Adrenal gland (tissue), 19 donors: ENCODE measurements at regions of chr16 and their contacts with region 1.

Region 1: DNA sequence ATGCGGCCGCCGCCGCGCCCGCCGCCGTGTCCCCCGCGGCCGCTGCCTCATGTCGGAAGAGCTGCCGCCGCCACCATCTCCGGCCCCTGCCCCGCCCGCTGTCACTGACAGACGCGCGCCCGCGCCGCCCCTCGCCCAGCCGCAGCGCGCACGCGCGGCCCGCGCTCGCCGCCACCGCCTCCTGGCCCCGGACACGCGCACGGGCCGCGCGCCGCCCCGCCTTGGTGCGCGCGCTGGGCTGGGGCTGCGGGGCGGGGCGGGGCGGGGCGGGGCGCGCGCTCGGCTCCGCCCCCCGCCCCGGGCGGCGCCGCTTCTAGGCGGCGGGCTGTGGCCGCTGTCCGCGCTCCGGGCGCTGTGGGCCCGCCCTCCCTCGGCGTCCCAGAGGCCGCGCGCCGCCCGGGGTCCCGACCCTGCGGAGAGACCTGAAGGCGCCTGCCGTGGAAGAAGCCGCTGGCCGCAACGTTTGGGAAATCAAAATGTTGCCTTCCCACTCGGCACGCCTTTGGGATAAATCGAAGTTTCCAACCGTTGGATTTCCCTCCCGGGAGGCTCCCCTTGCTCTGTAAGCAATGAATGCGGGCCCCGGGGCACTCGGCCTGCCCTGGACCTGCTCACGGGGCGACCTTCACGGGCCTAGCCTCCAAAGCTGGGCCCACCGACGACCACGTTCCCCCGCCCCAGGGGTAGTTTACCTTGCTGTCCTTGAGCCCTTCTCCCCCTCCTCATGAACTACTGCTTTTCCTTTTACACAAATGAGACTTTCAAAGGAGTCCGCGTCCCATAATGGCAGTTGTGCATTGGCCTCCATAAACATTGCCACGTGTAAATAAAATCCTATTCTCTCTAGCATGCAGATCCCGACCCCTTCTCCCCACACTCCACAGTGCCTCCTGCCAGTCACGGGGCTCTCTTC is at the start of gene ADCY9:
- DNase-seq: peak; percentile 59 to 82 (median 71)
- H3K4me3 ChIP-seq: peak within 1 kb of the TSS in 3 of 4 donors; percentile 55 to 83 (median 70)
- H3K27ac ChIP-seq: peak within 1 kb of the TSS in 4 of 5 donors; percentile 53 to 89 (median 60)
- H3K4me1 ChIP-seq: peaks cover 7 to 45% of the 10 kb centered on the region in 2 donors
- H3K27me3 ChIP-seq: no peaks in the 10 kb centered on the region
- CTCF ChIP-seq: no peak
- POLR2A ChIP-seq: peak; percentile 21 to 64
- total RNA-seq, gene ADCY9: 2.3 to 37.6 (median 20.0) TPM

Region 2: GRCh38 chr16:3983081-3983520 is 133.5 kb before region 1 on chr16:
- intact Hi-C with region 1: loop called in 1 of 2 experiments (anchors 5 kb)
- DNase-seq: peak; percentile 70 to 89 (median 79)
- H3K4me3 ChIP-seq: no peak overlapping the region
- H3K27ac ChIP-seq: no peak overlapping the region
- H3K4me1 ChIP-seq: no peaks in the 10 kb centered on the region
- H3K27me3 ChIP-seq: no peaks in the 10 kb centered on the region
- CTCF ChIP-seq: peak; percentile 36 to 83 (median 71)
- POLR2A ChIP-seq: no peak

Region 3: DNA sequence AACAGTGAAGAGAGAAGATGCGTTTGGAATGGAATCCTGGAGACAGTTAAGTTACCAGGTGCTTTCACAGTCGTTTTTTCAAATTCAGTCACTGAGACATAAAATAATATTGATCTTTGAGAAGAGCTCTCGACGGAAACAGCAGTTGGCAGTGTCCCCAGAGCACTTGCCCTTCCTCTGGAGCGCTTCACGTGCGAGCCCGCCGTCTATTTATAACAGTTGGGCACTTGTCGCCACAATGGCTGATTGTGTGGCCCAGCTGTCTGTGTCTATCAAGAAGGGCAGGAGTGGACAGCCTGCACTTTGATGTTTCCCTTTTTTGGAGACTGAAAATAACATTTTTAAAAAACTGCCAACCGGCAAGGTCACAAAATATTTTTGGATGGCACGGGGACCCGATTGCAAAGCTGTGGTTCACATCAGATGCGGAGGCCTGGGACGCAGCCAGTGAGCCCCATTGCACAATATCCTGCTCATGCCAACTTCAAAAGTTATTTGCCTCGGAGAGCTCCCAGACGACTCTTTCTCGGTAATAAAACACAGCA is 63.2 kb before region 1 on chr16:
- intact Hi-C with region 1: loop called in 1 of 2 experiments (anchors 10 kb)
- DNase-seq: peak; percentile 81 to 95 (median 91)
- H3K4me3 ChIP-seq: peak overlapping the region in 1 of 4 donors; percentile 28
- H3K27ac ChIP-seq: peak overlapping the region in 4 of 5 donors; percentile 44 to 70 (median 66)
- H3K4me1 ChIP-seq: peaks cover 17 to 22% of the 10 kb centered on the region in 2 donors
- H3K27me3 ChIP-seq: no peaks in the 10 kb centered on the region
- CTCF ChIP-seq: no peak
- POLR2A ChIP-seq: peak in 1 of 2 donors; percentile 32

Region 4: DNA sequence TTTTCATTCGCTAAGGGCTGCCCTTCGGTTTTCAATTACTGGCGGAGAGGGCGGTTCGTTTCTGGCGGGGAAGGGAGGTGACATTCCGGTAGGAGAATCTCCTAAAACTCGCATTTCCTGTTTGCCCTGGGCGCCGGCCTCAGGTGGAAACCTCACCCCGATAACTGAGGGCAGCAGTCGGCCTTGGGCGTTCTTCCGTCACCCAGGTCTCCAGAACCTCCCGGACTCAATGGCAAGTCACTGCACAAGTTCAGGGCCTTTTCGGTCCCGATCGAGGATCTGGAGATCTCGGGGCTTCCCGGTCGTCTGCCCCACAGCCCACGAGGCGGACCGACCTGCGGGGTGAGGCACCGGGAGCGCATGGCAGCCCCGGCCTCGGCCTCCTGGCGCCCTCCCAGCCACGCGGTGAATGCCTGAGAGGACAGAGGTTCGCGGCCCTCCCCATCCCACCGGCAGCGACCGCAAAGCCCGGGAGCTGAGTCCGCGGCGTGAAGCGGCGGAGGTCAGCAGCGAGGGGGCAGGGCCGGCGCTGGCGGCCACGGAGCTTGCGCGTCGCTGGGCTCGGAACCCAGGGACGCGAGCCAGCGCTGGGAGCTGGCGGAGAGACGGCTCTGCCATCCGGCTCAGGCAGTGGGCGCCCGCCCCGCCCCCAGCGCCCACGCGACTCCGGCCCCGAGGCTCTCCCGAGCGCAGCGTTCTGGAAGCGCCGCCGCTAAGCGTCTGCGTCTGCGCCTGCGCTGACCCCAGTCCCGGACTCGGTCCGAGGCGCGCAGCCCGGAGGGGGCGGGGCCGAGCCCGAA is 66.8 kb after region 1 on chr16:
- intact Hi-C with region 1: loop called in 1 of 2 experiments (anchors 5 kb)
- DNase-seq: peak; percentile 91 to 97 (median 94)
- H3K4me3 ChIP-seq: peak overlapping the region; percentile 41 to 86 (median 70)
- H3K27ac ChIP-seq: peak overlapping the region; percentile 95 to 98 (median 97)
- H3K4me1 ChIP-seq: peaks cover 5 to 7% of the 10 kb centered on the region in 2 donors
- H3K27me3 ChIP-seq: no peaks in the 10 kb centered on the region
- CTCF ChIP-seq: peak in 3 of 6 experiments; percentile 10 to 25 (median 14)
- POLR2A ChIP-seq: peak; percentile 40 to 82

Region 5: DNA sequence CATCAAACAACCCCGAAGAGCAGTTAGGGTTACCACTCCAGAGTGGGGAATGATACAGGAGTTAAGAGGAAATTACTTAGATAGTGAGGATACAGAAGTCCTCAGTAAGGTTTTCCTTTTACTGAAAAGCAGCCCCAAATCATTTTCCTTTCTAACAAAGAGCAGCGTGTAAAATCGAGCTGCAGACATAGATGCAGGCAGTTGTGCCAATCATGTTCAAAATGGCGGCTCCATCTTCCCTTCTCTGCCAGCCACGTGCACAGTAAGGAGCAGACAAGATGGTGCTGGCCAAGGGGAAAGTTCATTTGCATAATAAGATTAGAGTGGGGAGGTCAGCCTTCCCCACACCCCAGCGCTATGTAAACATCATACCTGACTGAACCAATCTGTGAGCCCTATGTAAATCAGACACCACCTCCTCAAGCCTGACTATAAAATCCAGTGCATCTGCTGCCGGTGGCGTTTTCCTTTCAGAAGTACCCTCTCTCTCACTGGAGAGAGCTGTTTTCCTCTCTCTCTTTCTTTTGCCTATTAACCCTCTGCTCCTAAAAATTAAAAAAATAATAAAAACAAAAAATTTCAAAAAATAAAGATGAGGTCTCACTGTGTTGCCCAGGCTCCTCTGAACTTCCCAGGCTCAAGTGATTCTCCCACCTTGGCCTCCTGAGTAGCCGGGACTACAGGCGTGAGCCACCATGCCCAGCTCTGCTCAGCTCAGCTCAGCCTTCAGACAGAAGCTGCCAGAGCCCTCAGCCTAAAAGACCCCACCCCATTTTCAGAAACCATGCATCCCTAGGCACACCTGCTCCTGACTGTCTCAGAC is 127.9 kb after region 1 on chr16:
- intact Hi-C with region 1: loop called in 1 of 2 experiments (anchors 10 kb)
- DNase-seq: peak in 1 of 7 donors; percentile 58
- H3K4me3 ChIP-seq: no peak overlapping the region
- H3K27ac ChIP-seq: no peak overlapping the region
- H3K4me1 ChIP-seq: no peaks in the 10 kb centered on the region
- H3K27me3 ChIP-seq: no peaks in the 10 kb centered on the region
- CTCF ChIP-seq: no peak
- POLR2A ChIP-seq: no peak

Region 6: GRCh38 chr16:4330277-4330874 is 213.8 kb after region 1 on chr16:
- intact Hi-C with region 1: no loop called
- DNase-seq: peak; percentile 77 to 91 (median 84)
- H3K4me3 ChIP-seq: no peak overlapping the region
- H3K27ac ChIP-seq: no peak overlapping the region
- H3K4me1 ChIP-seq: peaks cover 23 to 39% of the 10 kb centered on the region in 2 donors
- H3K27me3 ChIP-seq: no peaks in the 10 kb centered on the region
- CTCF ChIP-seq: peak; percentile 87 to 98 (median 96)
- POLR2A ChIP-seq: no peak